Pancreas (tissue), 10 donors: ENCODE measurements at regions of chr7 and their contacts with region 1.

Region 1: GRCh38 chr7:151936207-151936606 is 20.0 kb upstream of the GALNTL5 start:
- DNase-seq: no peak
- ATAC-seq: no peak
- H3K4me3 ChIP-seq: no peak overlapping the region
- H3K27ac ChIP-seq: peak overlapping the region in 1 of 4 donors; percentile 14
- H3K4me1 ChIP-seq: peaks cover 0 to 6% (median 2%) of the 10 kb centered on the region in 3 donors
- H3K27me3 ChIP-seq: no peaks in the 10 kb centered on the region
- CTCF ChIP-seq: no peak

Region 2: DNA sequence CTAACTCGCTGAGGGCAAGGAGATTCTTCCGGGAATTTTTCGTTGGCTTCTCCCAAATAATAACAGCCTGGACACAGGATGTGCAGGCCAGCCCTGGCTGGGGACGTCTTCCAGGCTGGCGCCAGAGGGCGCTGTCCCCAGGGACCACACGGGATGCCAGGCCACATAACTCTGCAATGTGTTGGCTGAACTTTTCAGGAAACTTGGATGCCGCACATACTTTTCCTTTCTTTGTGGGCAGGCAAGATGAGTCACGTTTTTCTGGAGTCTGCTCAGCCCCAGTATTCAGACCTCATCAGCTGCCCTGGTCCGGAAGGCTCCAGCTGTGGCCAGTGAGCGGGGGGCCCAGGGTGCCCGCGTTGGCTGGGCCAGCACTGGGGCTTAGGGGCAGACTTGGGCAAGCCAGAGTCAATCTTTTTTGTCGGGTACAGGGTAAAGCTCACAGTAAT is 182.0 kb before region 1 on chr7:
- intact Hi-C with region 1: loop called in 1 of 3 experiments (anchors 5 kb)
- DNase-seq: peak; percentile 61 to 89 (median 84)
- ATAC-seq: peak; percentile 93 to 97 (median 96)
- H3K4me3 ChIP-seq: no peak overlapping the region
- H3K27ac ChIP-seq: peak overlapping the region; percentile 52 to 67 (median 62)
- H3K4me1 ChIP-seq: no peaks in the 10 kb centered on the region
- H3K27me3 ChIP-seq: no peaks in the 10 kb centered on the region
- CTCF ChIP-seq: peak; percentile 81 to 84 (median 82)

Region 3: GRCh38 chr7:151782598-151783448 is 153.4 kb before region 1 on chr7:
- intact Hi-C with region 1: loop called in 1 of 3 experiments (anchors 10 kb)
- DNase-seq: peak; percentile 50 to 89 (median 67)
- ATAC-seq: peak; percentile 86 to 94 (median 89)
- H3K4me3 ChIP-seq: peak overlapping the region in 2 of 4 donors; percentile 14 to 33
- H3K27ac ChIP-seq: no peak overlapping the region
- H3K4me1 ChIP-seq: no peaks in the 10 kb centered on the region
- H3K27me3 ChIP-seq: no peaks in the 10 kb centered on the region
- CTCF ChIP-seq: peak; percentile 80 to 90 (median 89)